Calu3 (cell line): ENCODE measurements at regions of chr2 and their contacts with region 1.

Region 1: DNA sequence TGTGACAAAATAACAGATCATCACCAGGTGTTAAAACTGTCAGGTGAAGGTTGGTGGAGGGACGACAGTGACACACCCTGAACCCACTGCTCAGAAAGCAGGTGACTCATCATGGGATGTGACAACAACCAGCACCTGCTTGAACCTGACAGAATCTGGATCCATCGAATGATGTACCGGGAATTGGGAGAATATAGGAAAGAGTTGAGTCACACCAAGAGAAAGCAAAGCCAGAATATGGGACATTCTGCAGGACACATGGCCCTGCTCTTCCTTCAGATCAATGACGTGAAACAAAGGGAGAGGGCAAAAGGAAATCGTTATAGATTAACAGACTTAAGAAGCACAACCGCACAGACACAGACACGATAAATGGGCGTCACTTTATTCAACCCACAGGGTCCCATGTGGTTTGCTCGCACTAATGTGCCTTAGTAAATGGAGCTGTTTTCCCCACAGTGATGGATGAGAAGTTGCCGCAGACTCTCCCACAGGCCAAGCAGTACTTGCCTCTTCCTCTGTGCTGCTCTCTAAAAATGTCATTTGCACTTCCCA is 100.1 kb downstream of the CRACDL start:
- DNase-seq: no peak
- H3K4me3 Mint-ChIP-seq: no peak overlapping the region
- H3K27ac Mint-ChIP-seq: no peak overlapping the region
- H3K4me1 Mint-ChIP-seq: peaks cover 8% of the 10 kb centered on the region
- H3K27me3 Mint-ChIP-seq: no peaks in the 10 kb centered on the region
- CTCF ChIP-seq: no peak

Region 2: GRCh38 chr2:98649135-98649991 is 186.5 kb before region 1 on chr2:
- CTCF ChIA-PET with region 1: interaction called, 25 read pairs
- intact Hi-C with region 1: loop called (anchors 1 kb)
- DNase-seq: peak; percentile 75
- H3K4me3 Mint-ChIP-seq: no peak overlapping the region
- H3K27ac Mint-ChIP-seq: no peak overlapping the region
- H3K4me1 Mint-ChIP-seq: peaks cover 7% of the 10 kb centered on the region
- H3K27me3 Mint-ChIP-seq: no peaks in the 10 kb centered on the region
- CTCF ChIP-seq: peak; percentile 94

Region 3: GRCh38 chr2:98731041-98731893 is 104.6 kb before region 1 on chr2 and contains the start of gene MGAT4A:
- CTCF ChIA-PET with region 1: no interaction called
- intact Hi-C with region 1: loop called (anchors 10 kb)
- DNase-seq: peak; percentile 62
- H3K4me3 Mint-ChIP-seq: peak within 1 kb of the TSS; percentile 65
- H3K27ac Mint-ChIP-seq: no peak within 1 kb of the TSS
- H3K4me1 Mint-ChIP-seq: peaks cover 16% of the 10 kb centered on the region
- H3K27me3 Mint-ChIP-seq: no peaks in the 10 kb centered on the region
- CTCF ChIP-seq: no peak
- total RNA-seq, gene MGAT4A: 21.8 and 23.0 TPM in 2 replicates

Region 4: GRCh38 chr2:99066075-99066958 is 230.4 kb after region 1 on chr2:
- CTCF ChIA-PET with region 1: no interaction called
- intact Hi-C with region 1: loop called (anchors 1 kb)
- DNase-seq: peak; percentile 51
- H3K4me3 Mint-ChIP-seq: no peak overlapping the region
- H3K27ac Mint-ChIP-seq: no peak overlapping the region
- H3K4me1 Mint-ChIP-seq: no peaks in the 10 kb centered on the region
- H3K27me3 Mint-ChIP-seq: no peaks in the 10 kb centered on the region
- CTCF ChIP-seq: peak; percentile 31